Naive thymus-derived CD4-positive, alpha-beta T cell (primary cell): ENCODE measurements at regions of chr4 and their contacts with region 1.

Region 1: GRCh38 chr4:6909073-6909965 is at the start of gene TBC1D14:
- DNase-seq: peak; percentile 84 to 93 (median 90)
- ATAC-seq: peak; percentile 94
- H3K4me3 ChIP-seq: peak within 1 kb of the TSS; percentile 70
- H3K4me3 Mint-ChIP-seq: peak within 1 kb of the TSS; percentile 89 to 95 (median 91)
- H3K27ac ChIP-seq: peak within 1 kb of the TSS; percentile 97
- H3K27ac Mint-ChIP-seq: peak within 1 kb of the TSS; percentile 81 to 94 (median 91)
- H3K4me1 ChIP-seq: peaks cover 20 to 38% of the 10 kb centered on the region in 2 donors
- H3K4me1 Mint-ChIP-seq: peaks cover 45 to 60% (median 55%) of the 10 kb centered on the region in 7 donors
- H3K27me3 ChIP-seq: no peaks in the 10 kb centered on the region
- H3K27me3 Mint-ChIP-seq: peaks cover 0 to 2% (median 0%) of the 10 kb centered on the region in 5 donors
- total RNA-seq, gene TBC1D14: 42.9 to 72.2 (median 58.3) TPM

Region 2: DNA sequence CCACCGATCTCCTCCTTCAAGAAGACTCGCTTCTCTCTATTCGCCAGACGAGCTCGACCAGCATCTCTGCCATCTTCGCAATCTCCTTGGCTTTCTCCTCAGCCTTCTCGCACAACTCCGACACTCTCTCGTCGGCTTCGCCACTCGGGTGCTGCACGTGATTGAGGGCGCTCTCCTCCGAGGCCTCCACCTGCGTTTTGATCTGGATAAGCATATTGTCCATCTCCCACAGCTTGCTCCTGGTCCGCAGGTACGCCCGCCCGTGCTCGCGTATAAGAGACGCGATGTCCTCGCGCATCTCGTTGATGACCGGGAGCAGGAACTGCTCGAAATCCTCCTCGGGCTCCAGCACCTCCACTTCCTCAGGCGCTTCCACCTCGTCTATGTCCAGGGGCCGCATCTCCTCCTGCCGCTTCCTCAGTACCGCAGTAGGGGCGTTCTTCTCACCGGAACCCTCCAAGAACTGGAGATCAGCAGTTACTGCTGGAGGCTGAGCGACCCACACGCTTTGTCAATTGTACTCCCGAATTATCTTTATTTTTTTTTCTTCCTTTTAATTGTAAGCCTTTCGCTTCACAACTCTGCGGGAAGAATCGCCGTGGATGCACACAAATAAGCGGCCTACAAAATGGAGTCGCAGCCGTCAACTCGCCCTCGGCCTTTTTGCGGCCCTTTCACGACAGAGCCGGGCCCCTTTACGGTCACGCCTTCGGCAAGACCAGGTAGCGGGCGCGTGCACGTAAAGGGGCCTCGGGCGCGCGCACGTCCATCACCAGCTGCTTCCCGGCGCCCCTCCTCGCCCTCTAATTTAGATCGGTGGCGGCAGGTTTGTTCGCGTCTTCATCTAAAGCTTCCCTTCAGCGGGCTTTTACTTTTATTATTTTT is 199.8 kb before region 1 on chr4 and contains the start of gene MRFAP1L1:
- CTCF ChIA-PET with region 1: interaction called, 3 read pairs
- POLR2A ChIA-PET with region 1: interaction called, 5 read pairs
- intact Hi-C with region 1: loop called in 1 of 2 experiments (anchors 1 kb)
- DNase-seq: peak; percentile 91 to 98 (median 97)
- ATAC-seq: peak; percentile 99
- H3K4me3 ChIP-seq: peak within 1 kb of the TSS; percentile 93
- H3K4me3 Mint-ChIP-seq: peak within 1 kb of the TSS; percentile 96 to 100 (median 98)
- H3K27ac ChIP-seq: peak within 1 kb of the TSS; percentile 86
- H3K27ac Mint-ChIP-seq: peak within 1 kb of the TSS; percentile 95 to 99 (median 98)
- H3K4me1 ChIP-seq: peaks cover 38 to 48% of the 10 kb centered on the region in 2 donors
- H3K4me1 Mint-ChIP-seq: peaks cover 45 to 71% (median 65%) of the 10 kb centered on the region in 7 donors
- H3K27me3 ChIP-seq: no peaks in the 10 kb centered on the region
- H3K27me3 Mint-ChIP-seq: peaks cover 0 to 8% (median 0%) of the 10 kb centered on the region in 5 donors
- total RNA-seq, gene MRFAP1L1: 24.8 to 124 (median 73.6) TPM

Region 3: DNA sequence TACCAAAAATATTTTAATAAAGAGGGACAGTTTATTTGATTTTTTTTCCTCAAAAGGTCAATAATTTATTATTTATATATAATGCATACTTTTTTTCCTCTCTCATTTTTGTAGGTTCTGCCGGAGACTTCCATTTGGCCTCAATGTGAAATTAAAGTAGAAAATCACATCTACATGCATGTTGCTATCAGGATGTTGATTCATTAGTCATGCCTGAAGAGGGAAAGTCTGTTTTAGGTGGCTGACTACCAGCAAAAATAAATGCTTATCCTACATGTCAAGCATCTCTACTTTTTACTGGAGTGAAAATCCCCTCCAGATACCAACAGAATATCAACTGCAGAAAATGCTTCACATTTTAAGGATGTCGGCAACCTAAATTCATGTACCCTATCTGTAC is 85.2 kb before region 1 on chr4:
- CTCF ChIA-PET with region 1: no interaction called
- POLR2A ChIA-PET with region 1: no interaction called
- intact Hi-C with region 1: no loop called
- DNase-seq: no peak
- ATAC-seq: no peak
- H3K4me3 ChIP-seq: no peak overlapping the region
- H3K4me3 Mint-ChIP-seq: no peak overlapping the region
- H3K27ac ChIP-seq: no peak overlapping the region
- H3K27ac Mint-ChIP-seq: no peak overlapping the region
- H3K4me1 ChIP-seq: no peaks in the 10 kb centered on the region
- H3K4me1 Mint-ChIP-seq: peaks cover 6 to 54% (median 20%) of the 10 kb centered on the region in 7 donors
- H3K27me3 ChIP-seq: no peaks in the 10 kb centered on the region
- H3K27me3 Mint-ChIP-seq: no peaks in the 10 kb centered on the region

Region 4: DNA sequence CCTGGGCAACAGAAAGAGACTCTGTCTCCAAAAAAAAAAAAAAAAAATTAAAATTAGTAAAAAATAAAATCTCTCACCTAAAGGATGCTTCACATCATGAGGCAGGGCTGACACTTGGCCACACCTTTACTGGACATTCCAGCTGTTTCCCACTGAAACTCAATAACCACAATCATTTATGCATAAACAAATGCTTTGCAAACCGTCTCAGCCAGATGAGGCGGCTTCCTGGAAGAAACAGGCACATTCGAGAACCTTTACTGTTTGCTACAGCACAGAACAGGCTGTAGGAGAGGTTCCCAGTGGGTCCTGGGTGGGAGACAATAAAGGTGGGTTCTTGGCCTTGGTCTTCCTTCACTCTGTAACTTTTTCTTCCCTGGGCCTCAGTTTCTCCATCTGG is 10.6 kb before region 1 on chr4:
- CTCF ChIA-PET with region 1: interaction called, 3 read pairs
- POLR2A ChIA-PET with region 1: interaction called, 23 read pairs
- intact Hi-C with region 1: no loop called
- DNase-seq: no peak
- ATAC-seq: no peak
- H3K4me3 ChIP-seq: no peak overlapping the region
- H3K4me3 Mint-ChIP-seq: peak overlapping the region in 8 of 10 donors; percentile 43 to 81 (median 66)
- H3K27ac ChIP-seq: peak overlapping the region; percentile 38
- H3K27ac Mint-ChIP-seq: peak overlapping the region; percentile 87 to 96 (median 90)
- H3K4me1 ChIP-seq: peaks cover 19 to 20% of the 10 kb centered on the region in 2 donors
- H3K4me1 Mint-ChIP-seq: peaks cover 12 to 53% (median 28%) of the 10 kb centered on the region in 7 donors
- H3K27me3 ChIP-seq: no peaks in the 10 kb centered on the region
- H3K27me3 Mint-ChIP-seq: no peaks in the 10 kb centered on the region

Region 5: GRCh38 chr4:6942238-6942800 is 33.0 kb after region 1 on chr4:
- CTCF ChIA-PET with region 1: interaction called, 8 read pairs
- POLR2A ChIA-PET with region 1: interaction called, 62 read pairs
- intact Hi-C with region 1: loop called (anchors 1 to 2 kb)
- DNase-seq: peak in 8 of 9 donors; percentile 47 to 76 (median 64)
- ATAC-seq: peak; percentile 87
- H3K4me3 ChIP-seq: peak overlapping the region; percentile 46
- H3K4me3 Mint-ChIP-seq: peak overlapping the region; percentile 73 to 91 (median 83)
- H3K27ac ChIP-seq: peak overlapping the region; percentile 57
- H3K27ac Mint-ChIP-seq: peak overlapping the region; percentile 76 to 94 (median 90)
- H3K4me1 ChIP-seq: peaks cover 46 to 51% of the 10 kb centered on the region in 2 donors
- H3K4me1 Mint-ChIP-seq: peaks cover 48 to 85% (median 74%) of the 10 kb centered on the region in 7 donors
- H3K27me3 ChIP-seq: no peaks in the 10 kb centered on the region
- H3K27me3 Mint-ChIP-seq: no peaks in the 10 kb centered on the region

Region 6: DNA sequence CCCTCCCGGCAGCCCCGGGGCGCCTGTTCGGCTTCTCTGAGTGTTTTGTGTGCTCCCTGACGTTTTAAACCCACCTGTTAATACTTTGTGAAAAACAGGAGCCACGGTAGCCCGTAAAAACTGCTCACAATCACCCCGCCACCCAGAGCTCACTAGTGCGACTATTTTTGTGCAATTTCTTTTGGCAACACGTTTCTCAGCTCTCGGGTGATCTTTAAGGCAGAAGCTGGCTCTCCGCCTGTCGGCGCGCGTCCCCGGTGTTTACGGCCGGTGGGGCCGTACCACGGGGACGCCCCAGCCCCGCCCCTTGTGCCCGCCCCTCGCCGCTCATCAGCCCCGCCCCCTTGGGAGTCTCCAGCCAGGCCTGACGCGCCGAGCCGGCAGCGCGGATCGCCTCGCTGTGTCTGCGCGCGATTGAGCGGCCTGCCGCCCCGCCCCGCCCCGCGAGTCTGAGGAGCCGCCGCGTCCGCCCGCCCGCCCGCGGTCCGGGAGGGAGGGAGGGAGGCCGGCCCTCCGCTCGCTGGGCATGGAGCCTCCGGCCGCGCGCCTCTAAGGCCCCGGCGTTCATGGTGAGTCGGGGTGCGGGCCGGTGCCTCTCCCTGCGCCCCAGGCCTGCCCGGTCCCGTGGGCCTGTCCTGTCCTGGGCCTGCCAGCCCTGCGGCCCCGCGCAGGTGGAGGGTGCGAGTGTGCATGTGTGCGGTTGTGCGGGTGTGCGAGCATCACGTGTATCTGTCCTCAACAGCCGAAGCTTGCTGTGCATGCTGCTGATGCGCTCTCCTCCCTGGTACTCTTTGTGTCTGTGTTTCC is 77.7 kb after region 1 on chr4:
- CTCF ChIA-PET with region 1: interaction called, 4 read pairs
- POLR2A ChIA-PET with region 1: interaction called, 49 read pairs
- intact Hi-C with region 1: loop called (anchors 1 kb)
- DNase-seq: peak; percentile 87 to 95 (median 92)
- ATAC-seq: peak; percentile 98
- H3K4me3 ChIP-seq: peak overlapping the region; percentile 82
- H3K4me3 Mint-ChIP-seq: peak overlapping the region; percentile 94 to 100 (median 97)
- H3K27ac ChIP-seq: peak overlapping the region; percentile 86
- H3K27ac Mint-ChIP-seq: peak overlapping the region; percentile 89 to 99 (median 98)
- H3K4me1 ChIP-seq: peaks cover 29 to 37% of the 10 kb centered on the region in 2 donors
- H3K4me1 Mint-ChIP-seq: peaks cover 57 to 93% (median 84%) of the 10 kb centered on the region in 7 donors
- H3K27me3 ChIP-seq: no peaks in the 10 kb centered on the region
- H3K27me3 Mint-ChIP-seq: no peaks in the 10 kb centered on the region

Region 7: GRCh38 chr4:6999172-7000055 is 90.1 kb after region 1 on chr4:
- CTCF ChIA-PET with region 1: no interaction called
- POLR2A ChIA-PET with region 1: no interaction called
- intact Hi-C with region 1: no loop called
- DNase-seq: peak in 4 of 9 donors; percentile 8 to 47 (median 14)
- ATAC-seq: peak; percentile 87
- H3K4me3 ChIP-seq: no peak overlapping the region
- H3K4me3 Mint-ChIP-seq: peak overlapping the region in 4 of 10 donors; percentile 4 to 69 (median 17)
- H3K27ac ChIP-seq: peak overlapping the region; percentile 44
- H3K27ac Mint-ChIP-seq: peak overlapping the region in 7 of 9 donors; percentile 44 to 90 (median 61)
- H3K4me1 ChIP-seq: no peaks in the 10 kb centered on the region
- H3K4me1 Mint-ChIP-seq: peaks cover 0 to 41% (median 10%) of the 10 kb centered on the region in 7 donors
- H3K27me3 ChIP-seq: no peaks in the 10 kb centered on the region
- H3K27me3 Mint-ChIP-seq: no peaks in the 10 kb centered on the region

Region 8: GRCh38 chr4:8198906-8199593 is 1289.7 kb after region 1 on chr4 and contains the start of gene SH3TC1:
- CTCF ChIA-PET with region 1: no interaction called
- POLR2A ChIA-PET with region 1: no interaction called
- intact Hi-C with region 1: loop called in 1 of 2 experiments (anchors 5 kb)
- DNase-seq: peak; percentile 39 to 78 (median 57)
- ATAC-seq: peak; percentile 84
- H3K4me3 ChIP-seq: peak within 1 kb of the TSS; percentile 91
- H3K4me3 Mint-ChIP-seq: peak within 1 kb of the TSS; percentile 89 to 98 (median 96)
- H3K27ac ChIP-seq: peak within 1 kb of the TSS; percentile 84
- H3K27ac Mint-ChIP-seq: peak within 1 kb of the TSS; percentile 90 to 99 (median 96)
- H3K4me1 ChIP-seq: peaks cover 22 to 27% of the 10 kb centered on the region in 2 donors
- H3K4me1 Mint-ChIP-seq: peaks cover 29 to 43% (median 42%) of the 10 kb centered on the region in 7 donors
- H3K27me3 ChIP-seq: no peaks in the 10 kb centered on the region
- H3K27me3 Mint-ChIP-seq: peaks cover 0 to 3% (median 0%) of the 10 kb centered on the region in 5 donors
- total RNA-seq, gene SH3TC1: 33.8 to 120 (median 41.2) TPM